ENCODE measurements at regions of chr6 and their contacts with region 1.

Region 1: DNA sequence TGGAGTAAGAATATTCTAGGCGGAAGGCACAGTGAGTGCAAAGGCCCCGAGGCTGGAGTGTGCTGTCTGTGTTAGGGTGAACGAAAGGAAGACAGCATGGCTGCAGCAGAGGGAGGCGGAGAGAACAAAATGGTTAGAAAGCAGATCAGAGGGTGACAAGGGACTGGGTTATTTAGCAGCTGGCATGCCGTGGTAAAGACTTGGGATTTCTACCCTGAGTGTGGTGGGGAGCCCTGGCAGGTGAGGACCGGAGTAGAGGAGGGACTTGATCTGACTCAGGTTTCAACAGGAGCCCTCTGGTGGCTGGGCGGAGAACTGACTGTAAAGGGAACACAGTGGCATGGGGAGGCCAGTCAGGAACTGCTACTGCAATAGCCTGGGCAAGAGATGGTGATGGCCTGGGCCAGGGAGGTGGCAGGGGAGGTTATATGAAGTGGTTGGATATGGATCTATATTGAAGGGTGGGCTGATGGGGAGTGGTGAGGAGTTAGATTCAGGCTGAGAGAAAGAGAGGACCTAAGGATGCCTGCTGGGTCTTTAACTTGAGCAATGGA is 38.0 kb downstream of the PIM1 start:
- DNase-seq: peak; percentile 79 to 83 (median 81)
- H3K4me3 ChIP-seq: no peak overlapping the region
- H3K4me3 Mint-ChIP-seq: peak overlapping the region; percentile 39 to 61
- H3K27ac ChIP-seq: no peak overlapping the region
- H3K27ac Mint-ChIP-seq: peak overlapping the region in 5 of 7 donors; percentile 19 to 77 (median 58)
- H3K4me1 ChIP-seq: peaks cover 22 to 24% of the 10 kb centered on the region in 2 donors
- H3K4me1 Mint-ChIP-seq: peaks cover 38% of the 10 kb centered on the region
- H3K27me3 ChIP-seq: no peaks in the 10 kb centered on the region
- H3K27me3 Mint-ChIP-seq: peaks cover 0 to 5% (median 0%) of the 10 kb centered on the region in 3 donors
- CTCF ChIP-seq: peak; percentile 93

Region 2: GRCh38 chr6:37029249-37029971 is 178.6 kb before region 1 on chr6:
- intact Hi-C with region 1: loop called (anchors 1 to 2 kb)
- DNase-seq: peak; percentile 96 to 99 (median 98)
- H3K4me3 ChIP-seq: no peak overlapping the region
- H3K4me3 Mint-ChIP-seq: no peak overlapping the region
- H3K27ac ChIP-seq: peak overlapping the region; percentile 31 to 86
- H3K27ac Mint-ChIP-seq: peak overlapping the region; percentile 93 to 98 (median 95)
- H3K4me1 ChIP-seq: peaks cover 11 to 25% of the 10 kb centered on the region in 2 donors
- H3K4me1 Mint-ChIP-seq: peaks cover 25% of the 10 kb centered on the region
- H3K27me3 ChIP-seq: no peaks in the 10 kb centered on the region
- H3K27me3 Mint-ChIP-seq: peaks cover 0 to 5% (median 1%) of the 10 kb centered on the region in 3 donors
- CTCF ChIP-seq: peak; percentile 97

Region 3: DNA sequence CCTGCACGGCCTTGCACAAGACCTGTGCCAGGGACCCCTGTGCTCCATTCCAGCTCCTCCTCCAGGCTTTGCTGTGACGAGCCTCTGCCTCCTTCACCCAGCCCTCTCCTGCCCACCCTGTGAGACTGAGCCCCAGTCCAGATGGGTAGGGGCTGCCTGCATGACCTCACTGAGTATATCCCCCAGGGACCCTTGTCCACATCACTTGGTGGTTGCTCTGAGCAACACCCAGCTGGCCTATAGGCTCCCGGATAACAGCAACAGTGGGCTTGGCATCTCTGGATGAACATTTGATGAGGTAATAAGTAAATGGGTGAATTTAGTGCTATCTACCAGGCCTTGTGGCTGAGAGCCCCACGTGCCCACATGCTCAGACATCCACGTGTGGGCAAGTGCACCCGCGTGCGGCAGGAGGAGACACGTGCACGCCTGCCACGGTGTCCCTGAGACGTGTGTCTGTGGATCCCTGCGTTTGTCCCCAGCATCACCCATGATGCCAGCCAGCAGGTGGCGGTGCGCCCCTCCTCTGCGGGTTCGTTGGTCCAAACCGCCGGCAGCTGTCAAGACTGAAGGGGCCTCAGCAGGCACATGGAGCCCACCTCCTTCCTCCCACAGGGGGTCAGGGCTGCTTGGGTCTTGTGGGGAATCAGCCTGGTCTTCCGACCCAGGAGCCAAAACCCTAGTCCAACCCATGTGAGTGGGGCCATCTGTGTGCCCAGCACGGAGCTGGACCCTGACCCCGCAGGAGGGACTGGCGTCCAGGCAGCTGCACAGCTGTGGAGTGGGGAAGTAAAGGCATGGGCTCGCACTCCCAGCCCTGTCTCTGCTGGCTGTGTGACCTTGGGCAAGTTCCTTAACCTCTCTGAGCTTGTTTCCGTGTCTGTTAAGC is 156.6 kb before region 1 on chr6:
- intact Hi-C with region 1: loop called (anchors 10 kb)
- DNase-seq: peak; percentile 84 to 87 (median 84)
- H3K4me3 ChIP-seq: peak overlapping the region in 1 of 3 experiments; percentile 44
- H3K4me3 Mint-ChIP-seq: peak overlapping the region in 1 of 2 donors; percentile 64
- H3K27ac ChIP-seq: peak overlapping the region; percentile 95 to 97
- H3K27ac Mint-ChIP-seq: peak overlapping the region; percentile 88 to 99 (median 99)
- H3K4me1 ChIP-seq: peaks cover 53 to 67% of the 10 kb centered on the region in 2 donors
- H3K4me1 Mint-ChIP-seq: peaks cover 65% of the 10 kb centered on the region
- H3K27me3 ChIP-seq: no peaks in the 10 kb centered on the region
- H3K27me3 Mint-ChIP-seq: peaks cover 0 to 9% (median 8%) of the 10 kb centered on the region in 3 donors
- CTCF ChIP-seq: peak; percentile 88

Region 4: GRCh38 chr6:37691904-37692806 is 484.2 kb after region 1 on chr6:
- intact Hi-C with region 1: no loop called
- DNase-seq: peak; percentile 34 to 57 (median 48)
- H3K4me3 ChIP-seq: no peak overlapping the region
- H3K4me3 Mint-ChIP-seq: peak overlapping the region in 1 of 2 donors; percentile 67
- H3K27ac ChIP-seq: no peak overlapping the region
- H3K27ac Mint-ChIP-seq: no peak overlapping the region
- H3K4me1 ChIP-seq: peaks cover 10 to 12% of the 10 kb centered on the region in 2 donors
- H3K4me1 Mint-ChIP-seq: peaks cover 15% of the 10 kb centered on the region
- H3K27me3 ChIP-seq: peaks cover 35 to 48% of the 10 kb centered on the region in 2 donors
- H3K27me3 Mint-ChIP-seq: peaks cover 50 to 75% (median 62%) of the 10 kb centered on the region in 3 donors
- CTCF ChIP-seq: peak; percentile 97

Measured in CD14-positive monocyte (primary cell).